Astrocyte of the cerebellum (primary cell): ENCODE measurements at regions of chr5 and their contacts with region 1.

Region 1: DNA sequence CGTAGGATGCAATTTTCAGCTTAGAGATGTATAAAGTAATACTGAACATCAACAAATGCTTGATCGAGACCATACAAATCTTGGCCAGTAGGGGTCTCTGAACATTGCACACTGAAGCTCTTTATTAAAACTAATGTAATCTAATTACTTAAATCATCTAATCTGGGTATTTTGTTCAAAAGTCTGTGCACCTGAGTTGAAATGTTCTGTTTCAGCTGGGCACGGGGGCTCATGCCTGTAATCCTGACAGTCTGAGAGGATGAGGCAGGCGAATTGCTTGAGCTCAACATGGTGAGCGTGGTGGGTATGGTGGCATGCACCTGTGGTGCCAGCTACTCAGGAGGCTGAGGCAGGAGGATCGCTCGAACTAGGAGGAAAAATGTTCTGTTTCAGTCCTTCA is 41.0 kb downstream of the ESM1 start:
- DNase-seq: peak; percentile 19
- H3K4me3 ChIP-seq: no peak overlapping the region
- CTCF ChIP-seq: peak; percentile 73

Region 2: GRCh38 chr5:54171645-54172384 is 772.5 kb before region 1 on chr5:
- in situ Hi-C with region 1: no loop called
- DNase-seq: peak; percentile 49
- H3K4me3 ChIP-seq: no peak overlapping the region
- CTCF ChIP-seq: no peak

Region 3: GRCh38 chr5:54883374-54884212 is 60.8 kb before region 1 on chr5:
- in situ Hi-C with region 1: no loop called
- DNase-seq: no peak
- H3K4me3 ChIP-seq: peak overlapping the region; percentile 52
- CTCF ChIP-seq: no peak

Region 4: GRCh38 chr5:55146543-55147151 is 202.3 kb after region 1 on chr5:
- in situ Hi-C with region 1: loop called (anchors 25 kb)
- DNase-seq: peak; percentile 73
- H3K4me3 ChIP-seq: no peak overlapping the region
- CTCF ChIP-seq: peak; percentile 96

Region 5: GRCh38 chr5:55439008-55439407 is 494.6 kb after region 1 on chr5:
- in situ Hi-C with region 1: no loop called
- DNase-seq: peak; percentile 67
- H3K4me3 ChIP-seq: no peak overlapping the region
- CTCF ChIP-seq: no peak